Heart right ventricle (tissue), 16 donors: ENCODE measurements at regions of chr2 and their contacts with region 1.

Region 1: GRCh38 chr2:164917296-164917903 is 37.9 kb downstream of the SLC38A11 start:
- DNase-seq: peak; percentile 16 to 49
- ATAC-seq: peak in 7 of 8 donors; percentile 55 to 79 (median 68)
- H3K4me3 ChIP-seq: no peak overlapping the region
- H3K27ac ChIP-seq: no peak overlapping the region
- H3K4me1 ChIP-seq: peaks cover 0 to 25% (median 15%) of the 10 kb centered on the region in 9 donors
- H3K27me3 ChIP-seq: no peaks in the 10 kb centered on the region
- CTCF ChIP-seq: peak; percentile 23 to 80 (median 66)

Region 2: DNA sequence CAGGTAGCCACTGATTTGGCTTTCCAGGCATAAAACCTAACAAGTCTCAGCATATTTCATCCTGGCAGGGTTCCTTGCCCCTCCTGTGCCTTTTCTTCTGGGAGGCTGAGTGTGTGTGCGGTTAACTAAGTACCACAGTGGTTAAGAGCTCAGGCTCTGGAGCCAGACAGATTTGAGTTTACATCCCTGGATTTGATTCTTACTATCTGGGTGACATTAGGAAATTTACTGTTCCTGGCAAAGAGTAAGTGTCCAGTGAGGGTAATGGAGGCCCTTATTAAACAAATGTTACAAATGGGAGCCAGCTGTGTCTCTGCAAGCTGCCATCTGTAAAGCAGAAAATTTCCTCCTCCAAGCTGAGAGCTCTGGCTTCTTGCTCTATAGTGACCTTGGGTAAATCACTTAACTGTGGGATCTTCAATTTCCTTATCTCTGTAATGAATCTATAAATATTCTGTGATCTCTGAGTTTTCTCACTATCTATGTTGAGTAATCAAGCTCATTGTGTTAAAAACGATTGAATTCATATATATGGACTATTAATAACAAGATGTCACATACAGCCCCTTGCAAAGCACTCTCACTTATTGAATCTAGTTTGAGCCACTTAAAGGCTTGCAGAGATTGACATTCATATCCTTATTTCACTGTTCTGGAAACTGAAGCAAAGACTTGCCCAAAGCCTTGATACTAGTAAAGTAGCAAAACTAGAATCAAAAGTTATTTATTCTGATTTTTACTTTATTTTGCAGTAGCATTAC is 69.2 kb before region 1 on chr2:
- intact Hi-C with region 1: loop called in 9 of 10 experiments (anchors 5 to 10 kb)
- DNase-seq: no peak
- ATAC-seq: no peak
- H3K4me3 ChIP-seq: no peak overlapping the region
- H3K27ac ChIP-seq: no peak overlapping the region
- H3K4me1 ChIP-seq: peaks cover 0 to 4% (median 0%) of the 10 kb centered on the region in 9 donors
- H3K27me3 ChIP-seq: no peaks in the 10 kb centered on the region
- CTCF ChIP-seq: no peak

Region 3: GRCh38 chr2:165003433-165004130 is 86.2 kb after region 1 on chr2:
- intact Hi-C with region 1: no loop called
- DNase-seq: no peak
- ATAC-seq: no peak
- H3K4me3 ChIP-seq: no peak overlapping the region
- H3K27ac ChIP-seq: no peak overlapping the region
- H3K4me1 ChIP-seq: peaks cover 0 to 11% (median 0%) of the 10 kb centered on the region in 9 donors
- H3K27me3 ChIP-seq: no peaks in the 10 kb centered on the region
- CTCF ChIP-seq: no peak